Breast epithelium (tissue), 4 donors: ENCODE measurements at regions of chr20 and their contacts with region 1.

Region 1: DNA sequence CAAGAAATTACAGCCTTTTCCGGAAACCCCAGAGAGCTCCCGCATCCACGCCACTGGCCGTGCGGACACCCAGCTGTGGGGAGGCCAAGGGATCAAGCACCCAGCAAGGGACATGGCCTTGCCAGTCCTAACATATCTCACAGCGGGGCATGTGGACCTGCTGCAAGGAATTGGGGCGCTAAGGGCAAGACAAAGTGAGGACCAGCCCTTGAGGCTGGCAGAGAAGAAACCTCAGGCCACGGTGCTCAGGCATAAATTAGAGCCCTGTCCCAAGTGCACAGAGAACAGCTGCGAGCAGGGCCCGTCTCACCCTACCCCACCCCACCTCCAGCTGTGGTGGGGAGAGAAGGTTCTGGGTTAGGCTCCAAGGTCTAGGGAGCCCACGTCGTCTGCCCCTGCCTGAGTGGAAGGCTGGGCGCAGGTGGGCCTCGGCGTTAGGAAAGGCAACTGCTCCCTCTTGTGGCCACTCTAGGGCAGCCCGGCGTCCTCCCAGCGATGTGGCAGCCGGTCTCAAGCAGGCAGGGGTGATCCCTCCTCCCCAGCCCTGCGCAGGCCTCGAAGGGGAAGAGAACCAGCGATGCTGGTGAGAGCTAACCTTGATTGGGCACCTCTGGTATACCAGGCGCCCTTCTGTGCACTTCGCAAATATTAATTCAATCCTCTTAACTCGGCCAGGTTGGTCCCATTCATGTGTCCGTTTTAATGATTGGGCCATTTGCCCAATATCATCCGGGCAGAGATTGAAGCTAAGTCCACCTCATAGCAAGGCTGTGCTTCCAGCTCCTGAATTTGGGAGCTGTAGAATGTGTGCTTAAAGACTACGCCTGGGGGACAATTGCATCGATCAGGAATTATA is 235.8 kb downstream of the NFATC2 start:
- DNase-seq: peak; percentile 46 to 64
- H3K4me3 ChIP-seq: no peak overlapping the region
- H3K27ac ChIP-seq: no peak overlapping the region
- H3K4me1 ChIP-seq: no peaks in the 10 kb centered on the region
- H3K27me3 ChIP-seq: no peaks in the 10 kb centered on the region
- CTCF ChIP-seq: peak; percentile 36 to 86 (median 85)
- POLR2A ChIP-seq: no peak

Region 2: GRCh38 chr20:50980851-50981713 is 325.6 kb before region 1 on chr20:
- intact Hi-C with region 1: loop called (anchors 5 kb)
- DNase-seq: no peak
- H3K4me3 ChIP-seq: no peak overlapping the region
- H3K27ac ChIP-seq: no peak overlapping the region
- H3K4me1 ChIP-seq: no peaks in the 10 kb centered on the region
- H3K27me3 ChIP-seq: peaks cover 0 to 4% of the 10 kb centered on the region in 2 donors
- CTCF ChIP-seq: peak; percentile 57 to 66 (median 65)
- POLR2A ChIP-seq: no peak

Region 3: GRCh38 chr20:50996901-50997865 is 309.5 kb before region 1 on chr20:
- intact Hi-C with region 1: loop called (anchors 2 kb)
- DNase-seq: no peak
- H3K4me3 ChIP-seq: no peak overlapping the region
- H3K27ac ChIP-seq: no peak overlapping the region
- H3K4me1 ChIP-seq: no peaks in the 10 kb centered on the region
- H3K27me3 ChIP-seq: peaks cover 0 to 3% of the 10 kb centered on the region in 2 donors
- CTCF ChIP-seq: no peak
- POLR2A ChIP-seq: no peak